CD8-positive, alpha-beta T cell (primary cell): ENCODE measurements at regions of chr6 and their contacts with region 1.

Region 1: GRCh38 chr6:6584310-6585002 is 4.1 kb upstream of the LY86 start:
- DNase-seq: peak in 1 of 9 experiments; percentile 37
- ATAC-seq: no peak
- H3K4me3 ChIP-seq: no peak overlapping the region
- H3K4me3 Mint-ChIP-seq: no peak overlapping the region
- H3K27ac ChIP-seq: no peak overlapping the region
- H3K27ac Mint-ChIP-seq: peak overlapping the region; percentile 39
- H3K4me1 ChIP-seq: peaks cover 43% of the 10 kb centered on the region
- H3K4me1 Mint-ChIP-seq: peaks cover 52% of the 10 kb centered on the region
- H3K27me3 ChIP-seq: no peaks in the 10 kb centered on the region
- H3K27me3 Mint-ChIP-seq: no peaks in the 10 kb centered on the region
- CTCF ChIP-seq: no peak

Region 2: DNA sequence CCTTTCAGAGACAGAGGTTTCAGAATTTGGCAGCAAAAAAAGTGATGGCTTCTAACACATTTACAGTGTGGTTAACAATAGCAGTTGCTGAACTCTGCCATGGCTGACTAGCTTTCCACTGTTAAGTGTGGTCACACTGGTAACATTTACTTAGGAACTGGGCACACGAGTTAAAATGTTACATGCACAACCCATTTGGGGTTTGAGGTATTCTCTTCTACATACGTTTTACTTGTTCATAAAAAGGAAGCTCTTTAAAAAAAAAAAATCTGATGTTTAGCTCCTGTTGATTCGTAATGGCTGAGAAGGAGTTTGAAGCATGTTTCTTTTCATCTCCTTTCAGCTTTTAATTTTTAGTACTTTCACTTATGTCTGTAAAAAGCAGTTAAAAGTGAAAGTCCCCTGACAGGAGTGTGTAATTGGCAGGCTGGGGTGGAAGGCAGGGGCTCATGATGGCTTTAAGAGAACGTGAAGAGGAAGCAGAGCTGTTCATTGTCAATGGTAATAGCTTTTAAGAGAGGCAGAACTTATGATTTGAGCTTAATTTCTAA is 1077.2 kb before region 1 on chr6:
- CTCF ChIA-PET with region 1: no interaction called
- POLR2A ChIA-PET with region 1: no interaction called
- intact Hi-C with region 1: no loop called
- DNase-seq: peak in 3 of 9 experiments; percentile 43 to 66 (median 45)
- ATAC-seq: peak; percentile 85
- H3K4me3 ChIP-seq: peak overlapping the region; percentile 19 to 23
- H3K4me3 Mint-ChIP-seq: peak overlapping the region; percentile 64
- H3K27ac ChIP-seq: peak overlapping the region; percentile 41 to 59
- H3K27ac Mint-ChIP-seq: peak overlapping the region; percentile 87
- H3K4me1 ChIP-seq: peaks cover 23% of the 10 kb centered on the region
- H3K4me1 Mint-ChIP-seq: peaks cover 29% of the 10 kb centered on the region
- H3K27me3 ChIP-seq: no peaks in the 10 kb centered on the region
- H3K27me3 Mint-ChIP-seq: no peaks in the 10 kb centered on the region
- CTCF ChIP-seq: no peak

Region 3: GRCh38 chr6:6616656-6617055 is 32.2 kb after region 1 on chr6:
- CTCF ChIA-PET with region 1: no interaction called
- POLR2A ChIA-PET with region 1: no interaction called
- intact Hi-C with region 1: loop called in 1 of 2 experiments (anchors 5 kb)
- DNase-seq: peak in 1 of 9 experiments; percentile 14
- ATAC-seq: no peak
- H3K4me3 ChIP-seq: no peak overlapping the region
- H3K4me3 Mint-ChIP-seq: no peak overlapping the region
- H3K27ac ChIP-seq: no peak overlapping the region
- H3K27ac Mint-ChIP-seq: peak overlapping the region; percentile 29
- H3K4me1 ChIP-seq: peaks cover 51% of the 10 kb centered on the region
- H3K4me1 Mint-ChIP-seq: peaks cover 52% of the 10 kb centered on the region
- H3K27me3 ChIP-seq: no peaks in the 10 kb centered on the region
- H3K27me3 Mint-ChIP-seq: no peaks in the 10 kb centered on the region
- CTCF ChIP-seq: no peak

Region 4: GRCh38 chr6:6654599-6655575 is 70.4 kb after region 1 on chr6:
- CTCF ChIA-PET with region 1: no interaction called
- POLR2A ChIA-PET with region 1: no interaction called
- intact Hi-C with region 1: loop called (anchors 1 to 5 kb)
- DNase-seq: peak in 2 of 9 experiments; percentile 51 to 61
- ATAC-seq: peak; percentile 54
- H3K4me3 ChIP-seq: peak overlapping the region in 1 of 2 experiments; percentile 18
- H3K4me3 Mint-ChIP-seq: peak overlapping the region; percentile 44
- H3K27ac ChIP-seq: peak overlapping the region; percentile 4 to 13
- H3K27ac Mint-ChIP-seq: peak overlapping the region; percentile 86
- H3K4me1 ChIP-seq: peaks cover 65% of the 10 kb centered on the region
- H3K4me1 Mint-ChIP-seq: peaks cover 71% of the 10 kb centered on the region
- H3K27me3 ChIP-seq: no peaks in the 10 kb centered on the region
- H3K27me3 Mint-ChIP-seq: no peaks in the 10 kb centered on the region
- CTCF ChIP-seq: no peak

Region 5: DNA sequence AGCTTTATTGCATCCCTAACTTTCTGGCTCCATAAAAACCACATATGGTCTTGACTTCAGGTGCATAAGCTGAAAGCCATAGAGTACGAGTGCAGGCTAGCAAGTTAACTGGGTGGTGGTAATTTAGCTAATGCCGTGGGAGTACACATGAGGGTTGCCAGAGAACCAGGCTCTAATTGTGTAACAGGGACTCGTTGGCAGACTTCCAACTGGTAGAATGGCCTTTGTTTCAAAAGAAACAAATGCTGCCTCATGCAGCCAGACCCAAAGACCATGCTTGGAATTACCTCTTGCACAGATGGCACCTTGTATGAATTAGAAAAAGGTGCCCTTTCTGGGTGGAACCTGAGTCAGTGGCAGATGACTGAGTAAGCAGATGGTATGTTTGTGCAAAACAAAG is 77.2 kb after region 1 on chr6:
- CTCF ChIA-PET with region 1: no interaction called
- POLR2A ChIA-PET with region 1: no interaction called
- intact Hi-C with region 1: loop called in 1 of 2 experiments (anchors 5 kb)
- DNase-seq: no peak
- ATAC-seq: no peak
- H3K4me3 ChIP-seq: no peak overlapping the region
- H3K4me3 Mint-ChIP-seq: no peak overlapping the region
- H3K27ac ChIP-seq: no peak overlapping the region
- H3K27ac Mint-ChIP-seq: no peak overlapping the region
- H3K4me1 ChIP-seq: peaks cover 34% of the 10 kb centered on the region
- H3K4me1 Mint-ChIP-seq: peaks cover 56% of the 10 kb centered on the region
- H3K27me3 ChIP-seq: no peaks in the 10 kb centered on the region
- H3K27me3 Mint-ChIP-seq: no peaks in the 10 kb centered on the region
- CTCF ChIP-seq: no peak